MCF 10A (cell line): ENCODE measurements at regions of chr7 and their contacts with region 1.

Region 1: GRCh38 chr7:36389371-36390198 is at the start of gene ANLN:
- DNase-seq: peak; percentile 98
- H3K4me3 Mint-ChIP-seq: peak within 1 kb of the TSS; percentile 89
- H3K27ac Mint-ChIP-seq: peak within 1 kb of the TSS; percentile 94
- H3K4me1 Mint-ChIP-seq: peaks cover 41% of the 10 kb centered on the region
- H3K27me3 Mint-ChIP-seq: no peaks in the 10 kb centered on the region
- CTCF ChIP-seq: no peak
- total RNA-seq, gene ANLN: 64.3 and 104 TPM in 2 replicates

Region 2: GRCh38 chr7:35785250-35785649 is 604.3 kb before region 1 on chr7:
- CTCF ChIA-PET with region 1: no interaction called
- POLR2A ChIA-PET with region 1: no interaction called
- intact Hi-C with region 1: no loop called
- DNase-seq: no peak
- H3K4me3 Mint-ChIP-seq: no peak overlapping the region
- H3K27ac Mint-ChIP-seq: no peak overlapping the region
- H3K4me1 Mint-ChIP-seq: peaks cover 6% of the 10 kb centered on the region
- H3K27me3 Mint-ChIP-seq: no peaks in the 10 kb centered on the region
- CTCF ChIP-seq: no peak

Region 3: DNA sequence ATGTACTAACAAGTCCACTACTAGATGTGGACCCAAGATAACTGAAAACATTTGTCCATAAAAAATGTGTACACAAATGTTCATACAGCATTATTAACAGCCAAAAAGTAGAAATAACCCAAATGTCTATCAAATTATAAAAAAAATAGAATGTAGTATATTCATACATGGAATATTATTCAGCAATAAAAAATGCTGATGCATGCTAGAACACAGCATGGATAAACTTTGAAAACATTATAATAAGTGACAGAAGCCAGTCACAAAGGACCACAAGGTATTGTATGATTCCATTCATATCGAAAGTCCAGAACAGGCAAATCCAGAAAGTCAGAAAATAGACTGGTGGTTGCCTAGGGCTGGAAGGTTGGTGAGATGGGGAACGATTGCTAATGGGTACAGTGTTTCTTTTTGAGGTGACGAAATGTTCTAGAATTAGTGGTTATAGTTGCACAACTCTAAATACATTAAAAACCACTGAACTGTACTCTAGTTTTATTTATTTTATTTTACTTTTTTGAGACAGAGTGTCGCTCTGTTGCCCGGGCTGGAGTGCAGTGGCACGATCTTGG is 43.2 kb before region 1 on chr7:
- CTCF ChIA-PET with region 1: no interaction called
- POLR2A ChIA-PET with region 1: interaction called, 7 read pairs
- intact Hi-C with region 1: loop called (anchors 1 kb)
- DNase-seq: peak; percentile 69
- H3K4me3 Mint-ChIP-seq: no peak overlapping the region
- H3K27ac Mint-ChIP-seq: no peak overlapping the region
- H3K4me1 Mint-ChIP-seq: peaks cover 40% of the 10 kb centered on the region
- H3K27me3 Mint-ChIP-seq: no peaks in the 10 kb centered on the region
- CTCF ChIP-seq: no peak

Region 4: GRCh38 chr7:36366718-36367560 is 22.6 kb before region 1 on chr7:
- CTCF ChIA-PET with region 1: interaction called, 28 read pairs
- POLR2A ChIA-PET with region 1: interaction called, 87 read pairs
- intact Hi-C with region 1: loop called (anchors 1 kb)
- DNase-seq: peak; percentile 87
- H3K4me3 Mint-ChIP-seq: peak overlapping the region; percentile 80
- H3K27ac Mint-ChIP-seq: peak overlapping the region; percentile 70
- H3K4me1 Mint-ChIP-seq: no peaks in the 10 kb centered on the region
- H3K27me3 Mint-ChIP-seq: no peaks in the 10 kb centered on the region
- CTCF ChIP-seq: peak; percentile 83

Region 5: GRCh38 chr7:36400630-36401029 is 11.0 kb after region 1 on chr7:
- CTCF ChIA-PET with region 1: interaction called, 12 read pairs
- POLR2A ChIA-PET with region 1: interaction called, 73 read pairs
- intact Hi-C with region 1: no loop called
- DNase-seq: no peak
- H3K4me3 Mint-ChIP-seq: no peak overlapping the region
- H3K27ac Mint-ChIP-seq: peak overlapping the region; percentile 74
- H3K4me1 Mint-ChIP-seq: peaks cover 59% of the 10 kb centered on the region
- H3K27me3 Mint-ChIP-seq: no peaks in the 10 kb centered on the region
- CTCF ChIP-seq: no peak

Region 6: DNA sequence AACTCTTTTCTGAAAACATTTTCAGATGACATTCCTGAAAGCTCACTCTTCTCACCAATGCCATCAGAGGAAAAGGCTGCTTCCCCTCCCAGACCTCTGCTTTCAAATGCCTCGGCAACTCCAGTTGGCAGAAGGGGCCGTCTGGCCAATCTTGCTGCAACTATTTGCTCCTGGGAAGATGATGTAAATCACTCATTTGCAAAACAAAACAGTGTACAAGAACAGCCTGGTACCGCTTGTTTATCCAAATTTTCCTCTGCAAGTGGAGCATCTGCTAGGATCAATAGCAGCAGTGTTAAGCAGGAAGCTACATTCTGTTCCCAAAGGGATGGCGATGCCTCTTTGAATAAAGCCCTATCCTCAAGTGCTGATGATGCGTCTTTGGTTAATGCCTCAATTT is 16.6 kb after region 1 on chr7:
- CTCF ChIA-PET with region 1: interaction called, 12 read pairs
- POLR2A ChIA-PET with region 1: interaction called, 73 read pairs
- intact Hi-C with region 1: no loop called
- DNase-seq: no peak
- H3K4me3 Mint-ChIP-seq: no peak overlapping the region
- H3K27ac Mint-ChIP-seq: no peak overlapping the region
- H3K4me1 Mint-ChIP-seq: peaks cover 32% of the 10 kb centered on the region
- H3K27me3 Mint-ChIP-seq: no peaks in the 10 kb centered on the region
- CTCF ChIP-seq: no peak

Region 7: DNA sequence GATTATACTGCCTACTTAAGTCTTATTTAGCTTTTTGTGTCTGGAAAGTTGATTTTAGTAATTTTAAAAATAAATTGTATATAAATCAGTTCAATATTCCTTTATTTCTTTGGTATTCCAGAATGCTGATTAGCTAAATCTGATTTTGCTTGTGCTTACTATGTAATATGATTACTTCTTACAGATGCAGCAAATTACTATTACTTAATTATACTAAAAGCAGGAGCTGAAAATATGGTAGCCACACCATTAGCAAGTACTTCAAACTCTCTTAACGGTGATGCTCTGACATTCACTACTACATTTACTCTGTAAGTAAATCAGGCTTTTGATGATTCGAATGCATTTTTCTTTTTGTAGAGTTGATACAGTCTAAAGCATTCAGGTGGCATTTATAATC is 34.0 kb after region 1 on chr7:
- CTCF ChIA-PET with region 1: interaction called, 7 read pairs
- POLR2A ChIA-PET with region 1: interaction called, 40 read pairs
- intact Hi-C with region 1: no loop called
- DNase-seq: no peak
- H3K4me3 Mint-ChIP-seq: no peak overlapping the region
- H3K27ac Mint-ChIP-seq: peak overlapping the region; percentile 75
- H3K4me1 Mint-ChIP-seq: peaks cover 6% of the 10 kb centered on the region
- H3K27me3 Mint-ChIP-seq: no peaks in the 10 kb centered on the region
- CTCF ChIP-seq: no peak

Region 8: DNA sequence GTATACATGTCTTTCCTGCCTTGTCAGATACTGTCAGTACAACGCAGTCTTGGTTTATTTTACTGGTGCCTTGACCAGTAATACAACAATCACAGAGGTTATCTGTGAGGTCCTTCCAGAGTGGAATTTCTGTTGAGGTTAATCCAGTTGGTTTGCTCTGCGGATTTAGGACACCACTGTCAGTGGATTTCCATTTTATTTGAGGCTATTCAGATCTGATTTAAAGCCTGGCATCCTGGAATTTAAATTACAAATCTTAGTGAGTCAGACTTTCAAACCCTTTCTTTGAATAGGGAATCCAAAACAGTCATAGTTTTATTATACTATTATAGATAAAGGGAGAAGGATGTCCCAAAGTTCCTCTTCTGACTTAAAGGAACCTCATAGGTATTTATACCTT is 40.6 kb after region 1 on chr7:
- CTCF ChIA-PET with region 1: interaction called, 5 read pairs
- POLR2A ChIA-PET with region 1: interaction called, 40 read pairs
- intact Hi-C with region 1: no loop called
- DNase-seq: no peak
- H3K4me3 Mint-ChIP-seq: no peak overlapping the region
- H3K27ac Mint-ChIP-seq: peak overlapping the region; percentile 23
- H3K4me1 Mint-ChIP-seq: peaks cover 5% of the 10 kb centered on the region
- H3K27me3 Mint-ChIP-seq: no peaks in the 10 kb centered on the region
- CTCF ChIP-seq: no peak

Region 9: DNA sequence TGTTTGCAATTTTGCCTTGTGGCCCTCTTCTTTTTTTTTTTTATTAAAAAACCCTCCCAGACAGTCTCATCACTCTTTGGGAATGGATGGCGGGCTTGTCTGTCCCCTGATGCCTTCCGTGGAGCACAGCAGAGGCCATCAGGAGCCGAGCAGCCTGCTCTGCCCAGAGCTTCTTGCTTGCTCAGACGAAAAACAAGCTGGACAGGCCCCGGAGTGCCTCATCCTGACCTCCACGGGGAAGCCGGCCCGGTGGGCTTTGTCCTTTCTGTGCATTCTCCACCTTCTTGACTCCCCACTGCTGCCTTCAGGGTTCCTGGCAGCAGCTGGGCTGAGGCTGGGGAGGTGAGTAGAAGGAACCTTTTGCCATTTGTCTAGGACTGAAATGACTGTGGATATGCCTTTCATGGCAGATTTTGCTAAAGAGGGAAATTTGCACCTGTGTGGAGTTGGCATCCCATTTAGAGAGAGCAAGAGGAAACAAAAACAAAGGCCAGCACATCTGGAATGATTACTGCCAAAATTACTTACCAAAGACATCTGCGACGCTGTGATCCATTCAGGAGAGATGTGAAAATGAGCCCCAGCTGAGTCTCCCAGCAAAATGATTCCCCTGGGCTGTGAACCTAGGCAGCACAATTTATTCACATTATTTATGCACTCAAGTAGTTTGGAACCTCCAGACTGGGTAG is 226.4 kb after region 1 on chr7:
- CTCF ChIA-PET with region 1: no interaction called
- POLR2A ChIA-PET with region 1: no interaction called
- intact Hi-C with region 1: no loop called
- DNase-seq: no peak
- H3K4me3 Mint-ChIP-seq: no peak overlapping the region
- H3K27ac Mint-ChIP-seq: no peak overlapping the region
- H3K4me1 Mint-ChIP-seq: no peaks in the 10 kb centered on the region
- H3K27me3 Mint-ChIP-seq: no peaks in the 10 kb centered on the region
- CTCF ChIP-seq: no peak